GM10248 (cell line): ENCODE measurements at regions of chr10 and their contacts with region 1.

Region 1: DNA sequence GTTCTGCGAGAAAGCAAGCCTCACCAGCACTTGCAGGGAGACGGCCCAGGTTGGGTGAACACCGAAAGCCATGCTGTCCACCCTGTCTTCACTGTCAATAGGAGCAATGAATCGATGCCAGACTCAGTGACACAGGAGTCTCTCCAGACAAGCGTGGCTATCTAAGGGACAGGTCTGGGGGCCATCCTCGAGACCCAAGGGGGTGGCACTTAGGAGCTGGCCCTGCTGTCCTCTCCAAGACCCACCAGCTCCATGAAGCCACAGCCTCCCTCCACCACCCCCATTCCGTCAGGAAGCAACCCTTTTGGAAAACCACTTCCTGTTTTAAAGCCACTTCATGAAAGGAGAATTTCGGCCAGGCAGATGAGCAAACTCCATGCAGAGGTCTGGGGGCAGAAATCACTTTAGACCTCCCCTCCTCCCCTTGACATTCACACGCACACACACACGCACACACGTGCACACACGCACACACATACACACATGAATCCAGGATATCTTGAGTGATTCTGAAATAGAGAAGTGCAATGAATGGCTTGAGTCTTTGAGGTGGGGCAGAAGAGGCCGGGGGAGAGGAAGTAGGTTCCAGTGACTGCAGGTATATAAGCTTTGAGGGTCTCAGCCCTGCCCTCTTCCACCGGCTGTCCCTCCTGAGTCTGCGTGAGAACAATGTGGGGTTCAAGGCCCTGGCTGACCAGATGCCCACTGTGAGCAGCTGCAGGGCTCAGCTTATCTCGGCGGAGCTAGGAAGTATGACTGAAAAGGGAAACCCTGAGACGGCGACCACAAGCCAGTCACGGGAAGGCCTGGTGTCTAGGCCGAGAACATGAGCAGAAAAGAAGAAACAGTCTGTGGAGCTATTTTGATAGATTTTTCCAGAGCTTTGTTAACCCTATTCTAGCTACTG is 25.0 kb downstream of the RGS10 start:
- DNase-seq: peak; percentile 66
- CTCF ChIP-seq: no peak

Region 2: GRCh38 chr10:119500123-119500795 is 17.2 kb before region 1 on chr10:
- CTCF ChIA-PET with region 1: interaction called, 10 read pairs
- POLR2A ChIA-PET with region 1: interaction called, 7 read pairs
- DNase-seq: no peak
- CTCF ChIP-seq: no peak